ENCODE measurements at regions of chr5 and their contacts with region 1.

Region 1: DNA sequence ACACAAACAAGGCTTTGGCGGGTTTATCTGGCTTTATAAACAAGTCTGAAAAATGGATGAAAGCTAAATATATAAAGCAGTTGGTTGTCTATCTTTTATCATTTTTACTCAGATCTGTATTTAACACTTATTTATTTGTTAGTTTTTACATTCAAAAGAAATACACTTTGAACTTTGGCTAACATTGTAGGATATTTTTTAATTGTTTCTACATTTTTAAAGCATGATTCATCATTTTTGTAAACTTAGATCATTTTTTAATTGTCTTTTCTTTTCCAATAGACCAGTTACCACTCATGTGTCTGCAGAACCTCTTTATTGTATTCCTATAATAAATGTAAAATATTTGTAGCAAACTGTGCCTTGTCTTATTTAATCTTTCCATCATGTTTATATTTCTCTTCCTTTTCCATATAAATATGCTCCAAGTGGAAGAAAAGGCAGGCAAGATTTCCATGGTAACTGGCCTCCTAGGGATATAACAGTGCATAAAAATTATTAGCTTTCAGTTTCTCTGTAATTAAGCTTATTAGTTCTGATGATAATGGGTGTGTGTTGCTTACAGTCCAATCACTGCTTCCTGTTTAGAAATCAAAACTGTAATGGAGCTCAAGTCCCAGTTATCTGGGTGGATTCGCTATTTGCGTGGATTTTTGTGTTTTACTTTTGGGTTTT is 213.2 kb downstream of the PJA2 start:
- DNase-seq: no peak
- H3K4me3 ChIP-seq: no peak overlapping the region
- H3K27ac ChIP-seq: no peak overlapping the region
- H3K4me1 ChIP-seq: peaks cover 12% of the 10 kb centered on the region
- H3K27me3 ChIP-seq: no peaks in the 10 kb centered on the region
- CTCF ChIP-seq: no peak

Region 2: GRCh38 chr5:108702546-108702945 is 494.1 kb before region 1 on chr5:
- CTCF ChIA-PET with region 1: interaction called, 22 read pairs
- POLR2A ChIA-PET with region 1: no interaction called
- intact Hi-C with region 1: no loop called
- DNase-seq: no peak
- H3K4me3 ChIP-seq: no peak overlapping the region
- H3K27ac ChIP-seq: no peak overlapping the region
- H3K4me1 ChIP-seq: no peaks in the 10 kb centered on the region
- H3K27me3 ChIP-seq: no peaks in the 10 kb centered on the region
- CTCF ChIP-seq: no peak